Heart right ventricle (tissue), 16 donors: ENCODE measurements at regions of chr2 and their contacts with region 1.

Region 1: GRCh38 chr2:45821564-45822271 is 170.2 kb downstream of the PRKCE start:
- DNase-seq: peak; percentile 26 to 27
- ATAC-seq: peak in 5 of 8 donors; percentile 13 to 67 (median 41)
- H3K4me3 ChIP-seq: no peak overlapping the region
- H3K27ac ChIP-seq: peak overlapping the region in 8 of 10 donors; percentile 5 to 61 (median 45)
- H3K4me1 ChIP-seq: peaks cover 12 to 67% (median 38%) of the 10 kb centered on the region in 9 donors
- H3K27me3 ChIP-seq: no peaks in the 10 kb centered on the region
- CTCF ChIP-seq: no peak

Region 2: GRCh38 chr2:45729753-45730512 is 91.8 kb before region 1 on chr2:
- intact Hi-C with region 1: no loop called
- DNase-seq: no peak
- ATAC-seq: peak in 1 of 8 donors; percentile 35
- H3K4me3 ChIP-seq: no peak overlapping the region
- H3K27ac ChIP-seq: peak overlapping the region in 1 of 10 donors; percentile 48
- H3K4me1 ChIP-seq: peaks cover 0 to 49% (median 0%) of the 10 kb centered on the region in 9 donors
- H3K27me3 ChIP-seq: no peaks in the 10 kb centered on the region
- CTCF ChIP-seq: peak in 2 of 9 donors; percentile 8 to 28

Region 3: GRCh38 chr2:45889053-45889452 is 67.3 kb after region 1 on chr2:
- intact Hi-C with region 1: loop called in 1 of 10 experiments (anchors 10 kb)
- DNase-seq: peak in 1 of 2 donors; percentile 31
- ATAC-seq: peak in 7 of 8 donors; percentile 37 to 70 (median 53)
- H3K4me3 ChIP-seq: no peak overlapping the region
- H3K27ac ChIP-seq: no peak overlapping the region
- H3K4me1 ChIP-seq: peaks cover 8 to 98% (median 68%) of the 10 kb centered on the region in 9 donors
- H3K27me3 ChIP-seq: no peaks in the 10 kb centered on the region
- CTCF ChIP-seq: peak in 4 of 9 donors; percentile 4 to 22 (median 6)